ENCODE measurements at regions of chr18 and their contacts with region 1.

Region 1: GRCh38 chr18:26813043-26813442 is 52.5 kb downstream of the AQP4 start:
- DNase-seq: peak; percentile 58
- H3K4me3 Mint-ChIP-seq: no peak overlapping the region
- H3K27ac Mint-ChIP-seq: no peak overlapping the region
- H3K4me1 Mint-ChIP-seq: no peaks in the 10 kb centered on the region
- H3K27me3 Mint-ChIP-seq: peaks cover 12% of the 10 kb centered on the region
- CTCF ChIP-seq: peak; percentile 35

Region 2: DNA sequence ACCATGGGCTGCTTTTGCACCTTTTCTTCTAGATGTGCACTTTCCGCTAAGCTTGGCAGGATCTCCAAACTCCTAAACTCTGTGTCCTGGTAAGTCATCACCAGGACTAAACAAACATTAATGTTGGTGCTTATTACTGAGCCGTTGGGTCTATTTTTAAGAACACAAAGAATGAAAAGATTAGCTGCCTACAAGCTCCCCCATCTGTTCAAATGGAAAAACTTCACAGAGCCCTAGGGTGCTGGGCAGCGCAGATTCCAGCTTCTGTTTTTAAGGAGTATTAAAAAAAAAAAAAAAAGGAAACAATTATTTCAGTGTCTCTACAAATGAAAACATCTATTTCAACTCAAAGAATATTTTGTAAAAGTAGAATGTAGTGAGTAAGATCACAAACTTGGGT is 150.2 kb after region 1 on chr18:
- CTCF ChIA-PET with region 1: interaction called, 7 read pairs
- POLR2A ChIA-PET with region 1: no interaction called
- intact Hi-C with region 1: loop called (anchors 2 kb)
- DNase-seq: peak; percentile 33
- H3K4me3 Mint-ChIP-seq: no peak overlapping the region
- H3K27ac Mint-ChIP-seq: no peak overlapping the region
- H3K4me1 Mint-ChIP-seq: no peaks in the 10 kb centered on the region
- H3K27me3 Mint-ChIP-seq: no peaks in the 10 kb centered on the region
- CTCF ChIP-seq: peak; percentile 37

Region 3: GRCh38 chr18:27005589-27005988 is 192.5 kb after region 1 on chr18:
- CTCF ChIA-PET with region 1: interaction called, 5 read pairs
- POLR2A ChIA-PET with region 1: no interaction called
- intact Hi-C with region 1: loop called (anchors 2 kb)
- DNase-seq: peak; percentile 35
- H3K4me3 Mint-ChIP-seq: no peak overlapping the region
- H3K27ac Mint-ChIP-seq: no peak overlapping the region
- H3K4me1 Mint-ChIP-seq: no peaks in the 10 kb centered on the region
- H3K27me3 Mint-ChIP-seq: peaks cover 12% of the 10 kb centered on the region
- CTCF ChIP-seq: peak; percentile 28

Region 4: GRCh38 chr18:27298214-27298804 is 485.3 kb after region 1 on chr18:
- CTCF ChIA-PET with region 1: interaction called, 4 read pairs
- POLR2A ChIA-PET with region 1: no interaction called
- intact Hi-C with region 1: loop called (anchors 10 kb)
- DNase-seq: peak; percentile 38
- H3K4me3 Mint-ChIP-seq: no peak overlapping the region
- H3K27ac Mint-ChIP-seq: no peak overlapping the region
- H3K4me1 Mint-ChIP-seq: no peaks in the 10 kb centered on the region
- H3K27me3 Mint-ChIP-seq: no peaks in the 10 kb centered on the region
- CTCF ChIP-seq: peak; percentile 41

Region 5: DNA sequence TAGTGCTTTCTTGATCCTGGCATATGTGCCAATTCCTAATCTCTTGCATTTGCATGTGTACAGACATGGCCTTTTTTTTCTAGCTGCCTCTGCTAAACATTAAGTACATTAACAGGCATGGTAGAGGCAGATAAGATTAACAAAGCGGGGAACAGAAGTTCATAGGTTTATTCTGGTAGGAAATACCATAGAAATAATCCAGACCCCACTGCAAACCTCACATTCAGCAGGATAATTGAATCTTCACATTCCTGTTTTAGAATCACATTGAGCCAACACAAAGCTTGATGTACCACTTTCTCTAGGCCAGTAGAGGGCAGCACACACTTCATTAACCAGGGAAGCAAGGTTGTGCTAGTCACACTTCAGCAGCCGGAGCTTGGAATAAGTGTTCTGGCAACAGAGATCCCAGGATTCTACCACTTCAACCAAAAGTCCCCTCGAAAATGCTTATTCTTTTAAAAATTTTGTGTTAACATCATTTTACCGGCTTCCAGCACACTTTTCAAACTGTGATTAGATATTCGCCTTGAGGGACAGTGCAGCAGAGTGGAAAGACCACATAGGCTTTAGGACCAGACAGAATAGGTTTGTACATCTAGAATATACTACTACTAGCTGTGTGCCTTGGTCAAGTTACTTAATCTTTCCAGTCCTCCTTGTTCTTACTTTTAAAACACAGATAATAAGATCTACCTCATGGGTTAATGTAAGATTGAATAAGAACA is 792.2 kb after region 1 on chr18:
- CTCF ChIA-PET with region 1: interaction called, 4 read pairs
- POLR2A ChIA-PET with region 1: no interaction called
- intact Hi-C with region 1: loop called (anchors 10 kb)
- DNase-seq: peak; percentile 78
- H3K4me3 Mint-ChIP-seq: no peak overlapping the region
- H3K27ac Mint-ChIP-seq: no peak overlapping the region
- H3K4me1 Mint-ChIP-seq: peaks cover 5% of the 10 kb centered on the region
- H3K27me3 Mint-ChIP-seq: no peaks in the 10 kb centered on the region
- CTCF ChIP-seq: peak; percentile 72

Measured in MCF 10A (cell line).